ENCODE measurements at regions of chr7 and their contacts with region 1.

Region 1: DNA sequence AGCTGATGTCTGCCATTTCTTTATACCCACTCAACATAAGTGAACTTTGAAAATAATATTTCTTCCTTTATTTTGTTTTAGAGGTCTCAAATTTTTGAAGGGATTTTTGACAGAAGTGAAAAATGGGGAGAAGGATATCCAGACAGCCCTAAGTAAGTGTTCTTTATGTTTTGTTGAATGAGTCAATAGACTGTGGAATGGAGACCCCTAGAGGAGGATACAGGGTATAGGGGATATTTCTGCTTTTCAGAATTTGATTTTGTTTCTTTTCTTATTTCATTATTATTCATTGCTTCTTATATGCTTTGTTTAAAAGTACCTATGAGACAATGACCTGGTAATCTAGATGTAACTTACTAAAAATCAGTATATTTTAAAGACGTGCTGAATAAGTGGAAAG is 34.4 kb downstream of the PLEKHA8 start:
- DNase-seq: peak; percentile 28
- H3K4me3 ChIP-seq: no peak overlapping the region
- CTCF ChIP-seq: peak; percentile 62

Region 2: GRCh38 chr7:29748286-29749108 is 314.1 kb before region 1 on chr7:
- in situ Hi-C with region 1: loop called (anchors 25 kb)
- DNase-seq: peak; percentile 27
- H3K4me3 ChIP-seq: no peak overlapping the region
- CTCF ChIP-seq: peak; percentile 58

Region 3: DNA sequence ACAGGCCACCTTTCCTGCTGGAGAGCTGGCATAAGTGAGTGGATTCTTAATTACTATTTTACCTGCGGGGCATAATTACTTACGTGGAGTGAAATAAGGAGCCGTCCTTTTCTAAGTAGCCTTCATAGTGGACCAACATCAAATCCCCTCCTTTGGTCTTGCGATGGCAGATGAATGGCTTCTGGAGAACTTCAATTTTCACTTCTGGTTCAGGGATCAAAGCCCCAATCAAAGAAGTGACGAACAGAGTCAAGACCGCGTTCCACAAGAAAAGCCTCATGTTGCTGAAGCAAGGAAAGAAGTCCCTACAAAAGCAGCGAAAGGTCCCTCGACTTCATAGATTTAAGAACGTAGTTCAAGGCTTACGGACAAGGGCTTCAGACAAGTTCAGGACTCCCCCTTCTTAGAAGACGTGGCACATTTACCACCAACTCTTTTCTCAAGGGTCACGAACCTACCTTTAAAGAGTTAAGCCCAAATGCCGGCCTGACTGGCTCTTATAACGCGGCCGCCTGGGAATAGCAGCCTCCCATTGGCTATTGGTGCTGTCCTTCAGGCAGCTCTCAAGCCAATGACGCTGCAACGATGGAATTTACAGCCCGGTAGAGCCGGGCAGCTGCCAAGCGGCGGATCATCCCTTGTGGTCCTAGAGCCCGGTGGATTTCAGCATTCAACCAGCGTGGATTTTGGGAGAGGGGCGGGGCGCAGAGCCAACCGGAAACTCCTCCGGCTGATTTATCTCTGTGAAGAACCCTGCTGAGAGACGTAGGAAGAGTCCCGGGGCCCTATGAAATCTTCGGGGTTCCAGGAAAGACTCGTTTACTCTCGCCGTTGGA is 36.1 kb before region 1 on chr7 and contains the start of gene FKBP14:
- in situ Hi-C with region 1: loop called (anchors 5 kb)
- DNase-seq: peak; percentile 99
- H3K4me3 ChIP-seq: peak within 1 kb of the TSS; percentile 76
- CTCF ChIP-seq: no peak

Region 4: DNA sequence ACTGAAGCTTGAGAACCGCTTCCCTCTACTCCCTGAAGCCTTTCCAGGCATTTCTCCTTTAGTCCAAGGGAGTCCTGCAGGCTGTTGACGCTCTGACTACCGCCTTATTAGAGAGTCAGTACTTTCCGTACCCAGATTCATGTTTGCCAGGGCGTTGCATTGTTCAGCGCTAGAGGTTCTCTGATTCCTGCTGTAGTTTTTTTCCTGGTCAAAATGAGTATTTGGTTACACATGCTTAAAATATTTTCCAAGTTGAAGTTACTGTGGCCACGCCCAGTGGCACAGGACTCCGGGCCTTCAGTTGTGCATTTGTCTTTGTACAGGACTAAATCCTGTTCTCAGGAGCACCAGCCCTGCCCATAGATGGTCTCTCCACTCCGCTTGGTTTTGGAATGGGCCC is 80.1 kb after region 1 on chr7:
- in situ Hi-C with region 1: loop called (anchors 5 kb)
- DNase-seq: no peak
- H3K4me3 ChIP-seq: no peak overlapping the region
- CTCF ChIP-seq: no peak

Region 5: GRCh38 chr7:30206491-30206890 is 143.9 kb after region 1 on chr7:
- in situ Hi-C with region 1: no loop called
- DNase-seq: peak; percentile 18
- H3K4me3 ChIP-seq: no peak overlapping the region
- CTCF ChIP-seq: no peak

Measured in astrocyte of the cerebellum (primary cell).